Right lobe of liver (tissue), 6 donors: ENCODE measurements at regions of chr20 and their contacts with region 1.

Region 1: DNA sequence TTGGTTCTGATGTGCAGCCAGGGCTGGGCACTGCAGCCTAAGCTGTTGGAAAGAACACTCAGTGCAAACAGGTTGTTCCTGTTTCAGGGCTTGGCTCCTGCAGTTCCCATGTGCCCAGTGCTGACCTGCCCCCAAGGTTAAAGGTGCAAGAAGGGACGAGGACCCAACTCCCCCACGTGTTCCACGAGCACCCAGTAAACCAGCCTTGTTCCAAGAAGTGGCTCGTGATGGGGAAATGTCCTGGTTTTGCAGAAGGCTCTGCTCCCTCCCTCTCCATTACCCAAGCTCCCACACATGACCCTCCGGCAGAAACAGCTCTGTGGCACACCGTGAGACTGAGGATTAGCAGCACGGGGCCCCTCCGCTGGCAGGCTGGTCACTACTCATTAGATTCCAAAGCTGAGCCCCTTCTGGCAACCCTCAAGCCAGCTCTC is 9.4 kb downstream of the ACSS1 start:
- DNase-seq: peak; percentile 27 to 87 (median 72)
- ATAC-seq: peak in 3 of 4 donors; percentile 8 to 41 (median 13)
- H3K4me3 ChIP-seq: no peak overlapping the region
- H3K27ac ChIP-seq: no peak overlapping the region
- H3K4me1 ChIP-seq: peaks cover 3 to 83% (median 21%) of the 10 kb centered on the region in 4 donors
- H3K27me3 ChIP-seq: no peaks in the 10 kb centered on the region
- CTCF ChIP-seq: no peak
- POLR2A ChIP-seq: no peak

Region 2: DNA sequence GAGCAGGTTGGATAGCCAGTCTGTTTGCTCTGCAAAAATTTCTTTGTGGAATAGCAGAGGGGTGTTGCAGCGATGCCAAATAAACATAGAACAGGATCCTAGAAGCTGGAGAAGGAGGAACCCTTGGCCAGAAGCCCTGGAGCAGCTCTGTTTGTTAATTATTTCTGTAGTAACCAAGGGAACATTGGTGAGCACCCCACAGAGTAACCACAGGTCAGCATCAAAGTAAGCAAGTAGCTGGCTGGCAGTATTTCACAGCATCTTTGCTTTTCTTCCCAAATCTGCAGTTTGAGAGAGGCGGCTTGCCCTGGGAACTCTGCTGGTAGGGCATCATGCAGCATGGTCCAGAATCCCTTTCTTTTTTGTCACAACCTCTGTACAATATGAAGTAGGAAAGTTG is 43.3 kb before region 1 on chr20:
- intact Hi-C with region 1: loop called (anchors 5 kb)
- DNase-seq: peak in 1 of 3 donors; percentile 66
- ATAC-seq: peak; percentile 67 to 93 (median 84)
- H3K4me3 ChIP-seq: no peak overlapping the region
- H3K27ac ChIP-seq: no peak overlapping the region
- H3K4me1 ChIP-seq: peaks cover 0 to 23% (median 0%) of the 10 kb centered on the region in 4 donors
- H3K27me3 ChIP-seq: no peaks in the 10 kb centered on the region
- CTCF ChIP-seq: no peak
- POLR2A ChIP-seq: no peak